MCF 10A (cell line): ENCODE measurements at regions of chr6 and their contacts with region 1.

Region 1: GRCh38 chr6:29016559-29017427 is 11.7 kb upstream of the ZNF311 start:
- DNase-seq: peak; percentile 89
- H3K4me3 Mint-ChIP-seq: peak overlapping the region; percentile 69
- H3K27ac Mint-ChIP-seq: no peak overlapping the region
- H3K4me1 Mint-ChIP-seq: peaks cover 12% of the 10 kb centered on the region
- H3K27me3 Mint-ChIP-seq: peaks cover 4% of the 10 kb centered on the region
- CTCF ChIP-seq: peak; percentile 79

Region 2: DNA sequence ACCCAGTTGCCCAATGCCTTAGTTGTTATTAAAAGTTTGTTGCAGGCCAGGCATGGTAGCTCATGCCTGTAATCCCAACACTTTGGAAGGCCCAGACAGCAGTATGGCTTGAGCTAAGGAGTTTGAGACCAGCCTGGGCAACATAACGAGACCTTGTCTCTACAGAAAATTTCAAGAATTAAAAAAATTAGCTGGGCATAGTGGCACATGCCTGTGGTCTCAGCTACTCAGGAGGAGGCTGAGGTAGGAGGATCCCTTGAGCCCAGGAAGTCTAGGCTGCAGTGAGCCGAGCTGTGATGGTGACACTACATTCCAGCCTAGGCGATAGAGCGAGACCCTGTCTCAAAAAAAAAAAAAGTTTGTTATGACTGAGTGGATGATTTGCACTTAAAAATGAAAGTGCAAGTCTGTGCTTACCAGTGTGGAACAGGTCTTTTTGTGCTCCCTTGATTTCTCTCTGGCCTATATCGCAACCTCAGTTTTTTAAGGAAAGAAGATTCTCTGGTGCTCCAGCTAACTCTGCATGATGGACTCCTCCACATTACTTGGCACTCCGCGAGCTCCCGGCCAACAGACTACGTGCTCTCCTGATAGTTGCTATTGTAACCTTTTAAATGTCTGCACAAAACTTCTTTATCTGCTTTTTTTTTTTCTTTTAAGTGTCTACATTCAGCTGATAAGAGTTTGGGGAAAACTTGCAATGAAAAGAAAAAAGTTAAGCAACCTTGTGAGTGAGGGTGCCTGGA is 644.9 kb before region 1 on chr6:
- CTCF ChIA-PET with region 1: no interaction called
- POLR2A ChIA-PET with region 1: no interaction called
- intact Hi-C with region 1: no loop called
- DNase-seq: no peak
- H3K4me3 Mint-ChIP-seq: no peak overlapping the region
- H3K27ac Mint-ChIP-seq: no peak overlapping the region
- H3K4me1 Mint-ChIP-seq: no peaks in the 10 kb centered on the region
- H3K27me3 Mint-ChIP-seq: no peaks in the 10 kb centered on the region
- CTCF ChIP-seq: no peak

Region 3: DNA sequence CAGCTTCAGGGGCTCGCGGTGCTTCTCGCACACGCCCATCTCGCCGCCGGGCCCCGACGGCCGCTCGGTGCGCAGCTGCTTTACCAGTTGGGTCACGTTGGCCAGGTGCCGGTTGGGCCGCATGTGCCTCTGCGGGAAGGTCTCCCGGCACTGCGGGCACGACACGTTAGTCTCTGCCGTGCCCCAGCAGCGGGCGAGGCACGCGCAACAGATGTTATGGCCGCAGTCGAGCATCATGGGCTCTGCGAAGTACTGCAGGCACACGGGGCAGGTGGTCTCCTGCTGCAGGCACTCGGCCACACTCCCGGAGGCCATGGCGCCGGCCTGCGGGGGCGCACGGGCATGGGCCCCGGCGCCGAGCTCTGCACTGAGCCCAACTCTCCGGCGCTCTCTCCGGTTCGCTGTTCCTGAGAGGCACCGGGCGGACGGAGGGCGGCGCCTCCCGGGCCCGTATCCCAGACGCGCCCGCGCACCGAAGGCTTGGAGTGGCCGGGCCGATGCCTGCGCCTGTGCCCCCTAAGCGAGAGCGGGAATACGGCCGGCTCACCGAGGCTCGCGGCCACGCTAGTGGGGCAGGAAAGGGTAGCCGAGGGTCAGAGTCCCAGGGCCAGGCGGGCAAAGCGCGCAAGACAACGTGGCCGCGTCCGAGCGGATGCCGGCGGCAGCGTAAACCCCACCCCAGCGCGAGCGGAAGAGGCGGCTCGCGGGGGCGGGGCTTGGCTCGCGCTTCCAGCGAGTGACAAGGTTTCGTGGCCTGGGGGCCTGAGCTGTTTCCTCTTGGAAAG is 93.3 kb before region 1 on chr6 and contains the start of gene TRIM27:
- CTCF ChIA-PET with region 1: interaction called, 9 read pairs
- POLR2A ChIA-PET with region 1: interaction called, 6 read pairs
- intact Hi-C with region 1: loop called (anchors 2 kb)
- DNase-seq: peak; percentile 92
- H3K4me3 Mint-ChIP-seq: peak within 1 kb of the TSS; percentile 93
- H3K27ac Mint-ChIP-seq: peak within 1 kb of the TSS; percentile 88
- H3K4me1 Mint-ChIP-seq: peaks cover 19% of the 10 kb centered on the region
- H3K27me3 Mint-ChIP-seq: no peaks in the 10 kb centered on the region
- CTCF ChIP-seq: no peak
- total RNA-seq, gene TRIM27: 68.8 and 68.9 TPM in 2 replicates

Region 4: GRCh38 chr6:28988536-28989311 is 28.1 kb before region 1 on chr6:
- CTCF ChIA-PET with region 1: interaction called, 15 read pairs
- POLR2A ChIA-PET with region 1: interaction called, 5 read pairs
- intact Hi-C with region 1: loop called (anchors 2 kb)
- DNase-seq: no peak
- H3K4me3 Mint-ChIP-seq: peak overlapping the region; percentile 47
- H3K27ac Mint-ChIP-seq: no peak overlapping the region
- H3K4me1 Mint-ChIP-seq: peaks cover 6% of the 10 kb centered on the region
- H3K27me3 Mint-ChIP-seq: no peaks in the 10 kb centered on the region
- CTCF ChIP-seq: peak; percentile 11

Region 5: GRCh38 chr6:29005183-29005885 is 11.5 kb before region 1 on chr6 and contains the start of gene ZNF311:
- CTCF ChIA-PET with region 1: interaction called, 11 read pairs
- POLR2A ChIA-PET with region 1: no interaction called
- intact Hi-C with region 1: no loop called
- DNase-seq: peak; percentile 79
- H3K4me3 Mint-ChIP-seq: peak within 1 kb of the TSS; percentile 91
- H3K27ac Mint-ChIP-seq: peak within 1 kb of the TSS; percentile 65
- H3K4me1 Mint-ChIP-seq: peaks cover 18% of the 10 kb centered on the region
- H3K27me3 Mint-ChIP-seq: no peaks in the 10 kb centered on the region
- CTCF ChIP-seq: no peak
- total RNA-seq, gene ZNF311: 3.6 and 5.0 TPM in 2 replicates